ENCODE measurements at regions of chr9 and their contacts with region 1.

Region 1: GRCh38 chr9:68446836-68447235 is 90.4 kb downstream of the PGM5 start:
- DNase-seq: no peak
- H3K4me3 Mint-ChIP-seq: no peak overlapping the region
- H3K27ac Mint-ChIP-seq: no peak overlapping the region
- H3K4me1 Mint-ChIP-seq: no peaks in the 10 kb centered on the region
- H3K27me3 Mint-ChIP-seq: peaks cover 24% of the 10 kb centered on the region
- CTCF ChIP-seq: no peak

Region 2: GRCh38 chr9:68500457-68501381 is 53.9 kb after region 1 on chr9:
- CTCF ChIA-PET with region 1: no interaction called
- intact Hi-C with region 1: loop called (anchors 1 kb)
- DNase-seq: no peak
- H3K4me3 Mint-ChIP-seq: no peak overlapping the region
- H3K27ac Mint-ChIP-seq: no peak overlapping the region
- H3K4me1 Mint-ChIP-seq: peaks cover 9% of the 10 kb centered on the region
- H3K27me3 Mint-ChIP-seq: peaks cover 56% of the 10 kb centered on the region
- CTCF ChIP-seq: no peak

Measured in Calu3 (cell line).